ENCODE measurements at regions of chr12 and their contacts with region 1.

Region 1: DNA sequence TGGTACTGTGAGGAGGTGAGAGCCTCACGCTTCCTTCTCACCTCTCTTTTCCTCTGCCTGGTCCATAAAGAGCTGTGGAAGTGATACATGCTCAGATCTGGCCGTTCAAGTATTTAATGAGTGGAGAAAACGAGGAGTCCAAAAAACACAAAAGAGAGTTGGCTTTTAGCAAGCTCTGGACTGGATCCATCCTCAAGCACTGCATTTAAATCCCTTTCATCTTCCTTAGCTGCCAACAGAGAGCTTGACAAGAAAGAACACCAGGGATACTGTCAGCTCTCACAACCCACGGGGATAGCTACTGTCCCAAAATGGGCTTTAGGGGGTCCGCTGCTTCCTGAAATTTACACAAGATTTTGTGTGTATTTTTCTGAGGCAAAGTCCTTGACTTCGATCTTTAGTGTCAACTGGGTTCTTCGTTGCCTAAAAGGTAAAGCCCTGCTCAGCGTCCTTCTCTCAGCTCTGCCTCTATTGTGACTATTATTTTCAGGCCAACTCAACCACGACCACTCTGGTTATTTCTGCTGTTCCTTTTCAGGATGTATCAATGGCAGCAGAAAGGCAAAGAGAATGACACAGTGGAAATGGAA is 120.9 kb downstream of the TMTC1 start:
- DNase-seq: no peak
- ATAC-seq: peak; percentile 50

Region 2: DNA sequence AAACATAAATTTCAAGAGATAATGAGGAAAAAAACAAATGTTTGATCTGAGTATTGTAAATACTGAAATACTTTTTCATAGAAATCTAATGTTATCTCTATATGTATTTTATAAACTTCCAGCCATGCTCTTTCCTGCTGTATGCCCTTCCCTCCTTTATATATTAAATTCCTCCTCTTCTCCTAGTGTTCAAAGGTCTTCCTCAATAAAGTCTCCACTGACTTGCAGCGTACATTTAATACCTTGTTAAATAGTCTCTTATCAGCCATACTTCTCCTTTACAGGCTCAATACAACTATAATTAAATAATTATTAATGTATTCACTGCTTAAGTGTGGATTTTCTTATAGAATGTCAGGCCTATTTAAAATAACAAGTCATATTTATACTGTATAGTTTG is 307.9 kb before region 1 on chr12:
- intact Hi-C with region 1: no loop called
- DNase-seq: no peak
- ATAC-seq: no peak

Region 3: GRCh38 chr12:29710104-29710503 is 47.3 kb after region 1 on chr12:
- intact Hi-C with region 1: no loop called
- DNase-seq: no peak
- ATAC-seq: peak; percentile 87

Region 4: GRCh38 chr12:29733060-29733459 is 70.2 kb after region 1 on chr12:
- intact Hi-C with region 1: loop called (anchors 5 kb)
- DNase-seq: no peak
- ATAC-seq: no peak

Measured in Right ventricle myocardium inferior (tissue), 1 donor.